ENCODE measurements at regions of chr1 and their contacts with region 1.

Region 1: DNA sequence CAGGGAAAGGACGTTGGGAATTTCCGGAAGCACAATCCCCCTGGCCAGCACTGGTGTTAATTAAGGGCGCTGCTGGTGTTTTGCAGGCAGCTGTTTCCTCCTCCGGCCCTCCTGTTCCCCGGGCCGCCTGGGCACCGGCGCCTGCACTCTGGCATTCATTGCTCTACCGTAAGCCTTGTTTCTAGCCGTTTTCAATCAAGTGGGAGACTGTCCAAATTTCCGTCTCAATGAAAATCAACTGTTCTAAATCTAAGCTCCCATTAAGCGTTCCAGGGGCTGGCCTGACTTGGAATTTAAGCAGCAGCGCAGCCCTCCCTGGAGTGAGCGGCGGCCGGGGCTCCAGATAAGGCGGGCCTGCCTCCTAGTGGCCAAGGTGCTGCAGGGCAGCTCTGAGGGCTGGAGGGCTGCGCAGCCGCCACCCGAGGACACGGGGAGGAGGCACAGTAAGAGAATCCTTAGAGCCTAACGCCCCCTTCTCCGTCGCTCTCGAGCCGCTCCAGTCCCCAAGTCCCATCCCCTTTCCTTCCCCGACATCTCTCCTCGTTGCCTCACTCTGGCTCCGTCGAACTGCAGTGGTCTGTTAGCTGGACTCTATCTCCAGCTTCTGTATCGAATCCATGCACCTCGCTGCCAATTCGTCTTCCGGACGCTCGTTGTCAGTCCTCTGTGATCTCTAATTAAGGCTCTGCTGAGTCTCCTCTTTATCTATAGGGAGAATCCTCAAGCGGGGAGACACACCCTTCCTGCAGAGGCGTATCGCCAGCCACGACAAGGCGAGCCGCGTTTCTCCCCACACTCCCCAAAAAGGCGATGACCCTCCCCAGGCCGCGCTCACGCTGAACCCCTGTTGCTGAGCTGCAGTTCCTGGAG is 57.8 kb upstream of the LRRC8D start:
- DNase-seq: peak; percentile 88
- CTCF ChIP-seq: peak; percentile 100

Region 2: DNA sequence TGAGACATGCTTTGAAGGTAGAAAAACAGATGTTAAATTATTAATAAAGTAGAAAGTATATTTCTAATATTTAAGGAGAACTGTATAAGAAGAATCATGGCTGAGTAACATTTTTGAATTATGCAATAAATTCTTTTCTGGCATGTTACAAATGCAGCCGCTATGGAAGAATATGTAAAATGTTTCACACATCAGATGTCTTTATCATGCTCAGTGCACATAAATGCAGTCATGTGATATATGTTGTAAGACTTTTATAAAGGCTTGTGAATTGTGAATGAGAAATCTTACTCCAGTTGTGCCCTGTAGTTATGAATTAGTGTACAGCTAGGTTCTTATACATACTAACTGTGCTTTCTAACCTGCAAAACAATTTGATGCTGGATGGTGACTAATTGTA is 184.9 kb before region 1 on chr1:
- CTCF ChIA-PET with region 1: interaction called, 18 read pairs
- POLR2A ChIA-PET with region 1: no interaction called
- DNase-seq: no peak
- CTCF ChIP-seq: no peak

Region 3: GRCh38 chr1:89615676-89616598 is 147.1 kb before region 1 on chr1:
- CTCF ChIA-PET with region 1: interaction called, 30 read pairs
- POLR2A ChIA-PET with region 1: no interaction called
- DNase-seq: no peak
- CTCF ChIP-seq: peak; percentile 15

Region 4: DNA sequence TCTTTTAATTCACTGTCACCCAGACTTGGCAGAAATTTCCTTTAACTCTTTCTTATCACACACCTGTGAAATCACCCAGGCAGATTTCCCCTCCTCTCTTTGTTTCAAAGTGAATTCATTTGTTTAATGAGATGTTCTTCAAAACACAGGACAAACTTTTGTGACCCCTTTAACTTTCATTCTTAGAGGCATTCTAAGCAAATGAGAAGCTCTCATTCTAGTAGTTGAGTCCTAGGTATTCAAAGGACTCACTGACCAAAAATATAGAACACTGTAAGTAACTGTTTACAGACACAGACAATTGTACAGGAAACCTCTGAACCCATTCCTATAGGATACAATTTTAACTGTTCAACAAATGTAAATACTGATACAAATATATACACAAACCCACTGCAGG is 113.2 kb before region 1 on chr1:
- CTCF ChIA-PET with region 1: interaction called, 10 read pairs
- POLR2A ChIA-PET with region 1: no interaction called
- DNase-seq: no peak
- CTCF ChIP-seq: no peak

Region 5: GRCh38 chr1:89711140-89711778 is 51.8 kb before region 1 on chr1:
- CTCF ChIA-PET with region 1: interaction called, 10 read pairs
- POLR2A ChIA-PET with region 1: no interaction called
- DNase-seq: no peak
- CTCF ChIP-seq: no peak

Region 6: GRCh38 chr1:89746424-89747149 is 16.4 kb before region 1 on chr1:
- CTCF ChIA-PET with region 1: interaction called, 23 read pairs
- POLR2A ChIA-PET with region 1: no interaction called
- DNase-seq: no peak
- CTCF ChIP-seq: no peak

Measured in GM10248 (cell line).